Activated CD8-positive, alpha-beta T cell treated with anti-CD3 and anti-CD28 coated beads, Interleukin-2, amount 10 ng/mL, durations not matched to agents 7 days and 5 days (primary cell): ENCODE measurements at regions of chr16 and their contacts with region 1.

Region 1: DNA sequence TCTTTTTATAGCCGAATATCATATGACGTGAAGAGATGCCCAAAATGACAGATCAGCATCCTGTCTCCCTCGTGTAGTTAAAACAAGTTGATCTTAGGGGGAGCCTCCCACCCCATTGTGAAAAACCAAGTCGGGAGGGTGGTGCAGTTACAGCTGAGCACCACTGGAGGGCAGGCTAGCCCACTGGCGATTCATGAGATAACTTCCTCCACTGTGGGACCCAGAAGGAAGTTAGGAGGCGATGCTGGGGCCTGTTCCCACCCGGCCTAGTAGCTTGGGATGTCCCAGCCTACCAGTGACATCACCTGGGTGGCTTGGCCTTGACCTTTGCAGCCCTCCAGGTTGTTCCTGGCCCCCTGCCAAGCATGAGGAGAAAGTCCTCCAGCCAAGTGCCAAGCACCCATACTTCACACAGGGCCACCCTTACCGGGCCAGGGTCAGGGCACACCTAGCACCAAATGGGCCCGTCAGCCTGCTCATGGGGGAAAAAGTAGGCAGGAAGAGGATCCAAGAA is 8.1 kb upstream of the CPNE2 start:
- DNase-seq: peak; percentile 87
- ATAC-seq: peak; percentile 75
- H3K4me3 Mint-ChIP-seq: no peak overlapping the region
- H3K27ac Mint-ChIP-seq: peak overlapping the region; percentile 74
- H3K4me1 Mint-ChIP-seq: peaks cover 8% of the 10 kb centered on the region
- H3K27me3 Mint-ChIP-seq: peaks cover 5% of the 10 kb centered on the region

Region 2: DNA sequence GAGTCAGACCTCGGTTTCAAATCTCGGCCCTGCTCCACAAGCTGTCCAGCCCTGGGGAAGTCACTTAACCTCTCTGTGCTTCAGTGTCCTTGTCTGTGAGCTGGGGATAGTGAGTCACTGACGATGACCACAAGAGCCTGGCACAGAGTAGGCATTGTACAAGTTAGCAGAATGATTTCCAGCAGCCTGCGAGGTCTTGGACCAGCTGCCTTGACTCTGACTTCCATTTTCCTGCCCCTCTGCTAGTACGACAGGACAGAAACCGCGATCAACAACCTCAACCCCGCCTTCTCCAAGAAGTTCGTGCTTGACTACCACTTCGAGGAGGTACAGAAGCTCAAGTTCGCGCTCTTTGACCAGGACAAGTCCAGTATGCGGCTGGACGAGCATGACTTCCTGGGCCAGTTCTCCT is 28.7 kb after region 1 on chr16:
- CTCF ChIA-PET with region 1: interaction called, 13 read pairs
- POLR2A ChIA-PET with region 1: no interaction called
- DNase-seq: no peak
- ATAC-seq: no peak
- H3K4me3 Mint-ChIP-seq: no peak overlapping the region
- H3K27ac Mint-ChIP-seq: no peak overlapping the region
- H3K4me1 Mint-ChIP-seq: peaks cover 2% of the 10 kb centered on the region
- H3K27me3 Mint-ChIP-seq: peaks cover 4% of the 10 kb centered on the region

Region 3: GRCh38 chr16:57134982-57135381 is 50.7 kb after region 1 on chr16:
- CTCF ChIA-PET with region 1: interaction called, 20 read pairs
- POLR2A ChIA-PET with region 1: interaction called, 3 read pairs
- DNase-seq: peak; percentile 56
- ATAC-seq: peak; percentile 74
- H3K4me3 Mint-ChIP-seq: peak overlapping the region; percentile 76
- H3K27ac Mint-ChIP-seq: peak overlapping the region; percentile 88
- H3K4me1 Mint-ChIP-seq: peaks cover 67% of the 10 kb centered on the region
- H3K27me3 Mint-ChIP-seq: no peaks in the 10 kb centered on the region

Region 4: GRCh38 chr16:57167953-57168352 is 83.6 kb after region 1 on chr16:
- CTCF ChIA-PET with region 1: interaction called, 24 read pairs
- POLR2A ChIA-PET with region 1: no interaction called
- DNase-seq: peak; percentile 41
- ATAC-seq: peak; percentile 87
- H3K4me3 Mint-ChIP-seq: no peak overlapping the region
- H3K27ac Mint-ChIP-seq: no peak overlapping the region
- H3K4me1 Mint-ChIP-seq: peaks cover 5% of the 10 kb centered on the region
- H3K27me3 Mint-ChIP-seq: no peaks in the 10 kb centered on the region